PC-3 (cell line): ENCODE measurements at regions of chr6 and their contacts with region 1.

Region 1: DNA sequence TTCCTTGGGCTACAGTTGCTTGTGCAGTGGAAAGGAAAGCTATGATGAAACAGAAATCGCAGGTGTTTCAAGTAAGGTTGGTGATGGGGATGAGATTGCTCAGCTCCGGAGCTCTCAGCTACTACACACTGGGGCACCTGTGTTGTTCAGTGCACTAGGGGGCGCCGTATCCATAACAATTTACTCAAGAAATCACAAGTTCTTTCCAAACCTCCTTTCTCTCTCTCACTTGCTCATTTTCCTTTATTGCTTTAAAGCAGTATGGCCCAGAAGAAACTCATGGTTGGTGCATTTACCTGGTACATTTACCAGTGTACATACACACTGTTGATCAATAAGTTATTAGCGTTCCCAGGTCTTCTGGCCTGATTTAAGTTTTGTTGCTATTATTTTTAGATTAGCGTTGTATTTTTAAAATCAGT is 235.2 kb upstream of the TAB2 start:
- DNase-seq: peak; percentile 69
- ATAC-seq: peak; percentile 86
- H3K4me3 ChIP-seq: no peak overlapping the region
- H3K27ac ChIP-seq: no peak overlapping the region
- H3K4me1 ChIP-seq: peaks cover 36% of the 10 kb centered on the region
- H3K27me3 ChIP-seq: no peaks in the 10 kb centered on the region
- CTCF ChIP-seq: peak; percentile 80

Region 2: GRCh38 chr6:149170564-149171452 is 88.5 kb after region 1 on chr6:
- CTCF ChIA-PET with region 1: no interaction called
- POLR2A ChIA-PET with region 1: no interaction called
- intact Hi-C with region 1: no loop called
- DNase-seq: no peak
- ATAC-seq: no peak
- H3K4me3 ChIP-seq: no peak overlapping the region
- H3K27ac ChIP-seq: peak overlapping the region; percentile 65
- H3K4me1 ChIP-seq: peaks cover 30% of the 10 kb centered on the region
- H3K27me3 ChIP-seq: no peaks in the 10 kb centered on the region
- CTCF ChIP-seq: no peak

Region 3: GRCh38 chr6:149316798-149317655 is 234.7 kb after region 1 on chr6:
- CTCF ChIA-PET with region 1: no interaction called
- POLR2A ChIA-PET with region 1: no interaction called
- intact Hi-C with region 1: loop called (anchors 5 kb)
- DNase-seq: peak; percentile 86
- ATAC-seq: peak; percentile 83
- H3K4me3 ChIP-seq: peak overlapping the region; percentile 93
- H3K27ac ChIP-seq: peak overlapping the region; percentile 69
- H3K4me1 ChIP-seq: peaks cover 24% of the 10 kb centered on the region
- H3K27me3 ChIP-seq: no peaks in the 10 kb centered on the region
- CTCF ChIP-seq: no peak

Region 4: DNA sequence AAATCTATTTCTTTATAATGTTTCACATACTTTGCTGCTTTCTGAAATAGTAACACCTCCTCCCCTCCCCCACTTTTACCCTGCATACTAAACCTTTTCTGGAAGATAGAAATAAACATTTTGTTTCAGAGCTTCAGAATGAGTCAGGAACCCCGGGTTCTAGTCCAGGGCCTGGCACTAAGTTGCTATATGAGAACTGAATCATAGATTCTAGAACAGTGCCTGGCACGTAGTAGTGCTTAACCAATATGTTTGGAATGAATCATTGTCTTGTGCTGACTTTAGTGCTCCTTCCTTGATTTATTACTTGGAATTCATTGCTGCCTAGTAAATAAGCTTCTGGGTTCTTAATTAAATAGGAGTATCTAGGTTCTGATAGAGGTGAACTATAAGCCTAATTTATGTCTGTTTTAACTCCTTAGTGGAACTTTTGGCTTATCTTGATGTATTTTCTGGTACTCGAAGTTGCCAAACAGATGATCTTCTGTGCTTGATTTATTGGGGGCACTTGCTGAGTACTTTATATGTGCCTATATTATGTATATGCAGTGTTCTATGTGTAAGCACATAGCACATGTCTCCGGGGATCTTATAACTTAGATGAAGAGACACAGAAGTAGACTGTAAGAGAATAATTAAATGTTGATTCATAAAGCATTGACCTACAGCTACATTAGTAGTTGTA is 253.8 kb after region 1 on chr6:
- CTCF ChIA-PET with region 1: no interaction called
- POLR2A ChIA-PET with region 1: no interaction called
- intact Hi-C with region 1: loop called (anchors 5 kb)
- DNase-seq: peak; percentile 81
- ATAC-seq: peak; percentile 35
- H3K4me3 ChIP-seq: no peak overlapping the region
- H3K27ac ChIP-seq: peak overlapping the region; percentile 91
- H3K4me1 ChIP-seq: peaks cover 75% of the 10 kb centered on the region
- H3K27me3 ChIP-seq: no peaks in the 10 kb centered on the region
- CTCF ChIP-seq: no peak

Region 5: GRCh38 chr6:149431905-149432775 is 349.8 kb after region 1 on chr6:
- CTCF ChIA-PET with region 1: interaction called, 5 read pairs
- POLR2A ChIA-PET with region 1: no interaction called
- intact Hi-C with region 1: loop called (anchors 1 kb)
- DNase-seq: peak; percentile 87
- ATAC-seq: peak; percentile 94
- H3K4me3 ChIP-seq: no peak overlapping the region
- H3K27ac ChIP-seq: no peak overlapping the region
- H3K4me1 ChIP-seq: no peaks in the 10 kb centered on the region
- H3K27me3 ChIP-seq: no peaks in the 10 kb centered on the region
- CTCF ChIP-seq: peak; percentile 89

Region 6: GRCh38 chr6:149499066-149499465 is 416.8 kb after region 1 on chr6:
- CTCF ChIA-PET with region 1: no interaction called
- POLR2A ChIA-PET with region 1: no interaction called
- intact Hi-C with region 1: loop called (anchors 5 kb)
- DNase-seq: peak; percentile 92
- ATAC-seq: peak; percentile 79
- H3K4me3 ChIP-seq: no peak overlapping the region
- H3K27ac ChIP-seq: peak overlapping the region; percentile 75
- H3K4me1 ChIP-seq: peaks cover 29% of the 10 kb centered on the region
- H3K27me3 ChIP-seq: no peaks in the 10 kb centered on the region
- CTCF ChIP-seq: no peak

Region 7: DNA sequence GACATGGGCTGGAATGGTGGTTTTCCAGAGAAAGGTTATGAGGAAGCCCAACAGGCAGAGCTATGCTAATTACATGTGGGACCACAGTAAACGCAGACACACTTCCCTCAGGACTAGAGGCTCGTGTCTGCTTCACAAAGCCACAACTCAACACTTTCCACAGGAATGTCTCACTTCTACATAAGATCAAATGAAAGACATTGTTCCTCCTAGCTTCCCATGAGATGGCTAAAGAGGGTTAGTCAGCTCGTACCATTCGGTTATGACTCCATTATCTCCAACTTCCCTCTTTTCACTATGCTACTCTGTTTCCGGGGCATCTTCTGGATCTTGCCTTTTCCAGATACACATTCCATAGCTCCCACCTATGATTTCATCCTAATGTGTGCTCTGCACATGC is 431.6 kb after region 1 on chr6:
- CTCF ChIA-PET with region 1: no interaction called
- POLR2A ChIA-PET with region 1: no interaction called
- intact Hi-C with region 1: loop called (anchors 5 kb)
- DNase-seq: no peak
- ATAC-seq: no peak
- H3K4me3 ChIP-seq: no peak overlapping the region
- H3K27ac ChIP-seq: no peak overlapping the region
- H3K4me1 ChIP-seq: no peaks in the 10 kb centered on the region
- H3K27me3 ChIP-seq: no peaks in the 10 kb centered on the region
- CTCF ChIP-seq: no peak